Left cardiac atrium (tissue), 4 donors: ENCODE measurements at regions of chr6 and their contacts with region 1.

Region 1: GRCh38 chr6:17599885-17600526 is at the start of gene FAM8A1:
- DNase-seq: peak; percentile 97
- ATAC-seq: peak; percentile 98
- total RNA-seq, gene FAM8A1: 16.7 to 18.5 TPM

Region 2: DNA sequence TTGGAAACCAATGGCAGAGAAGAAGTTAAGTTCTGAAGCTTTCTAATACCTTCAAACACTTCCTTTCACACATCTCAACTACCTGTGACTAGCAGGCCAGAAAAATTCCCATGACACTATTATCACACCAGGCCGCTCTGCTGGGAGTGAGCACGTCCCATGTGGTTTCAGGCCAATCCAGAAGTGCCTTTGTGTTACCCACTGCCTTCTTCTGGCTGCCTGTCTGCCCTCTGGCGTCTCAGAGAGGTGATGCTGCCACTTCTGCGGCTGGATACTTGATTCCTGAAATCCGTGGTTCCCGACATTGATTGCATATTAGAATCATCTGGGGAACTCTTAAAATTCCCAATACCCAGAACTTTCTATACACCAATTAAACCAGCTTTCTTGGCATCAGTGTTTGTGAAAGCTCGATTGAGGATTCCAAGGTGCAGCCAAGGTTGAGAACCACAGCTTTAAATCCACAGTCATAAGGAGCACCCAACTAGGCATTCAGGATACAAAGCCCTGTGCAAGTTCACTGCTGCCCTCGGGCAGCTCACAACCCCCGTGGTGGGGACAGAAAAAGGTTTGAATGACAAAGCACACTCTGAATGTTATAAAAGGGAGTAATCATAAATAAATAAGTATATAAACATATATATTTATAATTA is 432.6 kb before region 1 on chr6:
- intact Hi-C with region 1: no loop called
- DNase-seq: peak; percentile 45
- ATAC-seq: peak; percentile 82 to 90

Region 3: DNA sequence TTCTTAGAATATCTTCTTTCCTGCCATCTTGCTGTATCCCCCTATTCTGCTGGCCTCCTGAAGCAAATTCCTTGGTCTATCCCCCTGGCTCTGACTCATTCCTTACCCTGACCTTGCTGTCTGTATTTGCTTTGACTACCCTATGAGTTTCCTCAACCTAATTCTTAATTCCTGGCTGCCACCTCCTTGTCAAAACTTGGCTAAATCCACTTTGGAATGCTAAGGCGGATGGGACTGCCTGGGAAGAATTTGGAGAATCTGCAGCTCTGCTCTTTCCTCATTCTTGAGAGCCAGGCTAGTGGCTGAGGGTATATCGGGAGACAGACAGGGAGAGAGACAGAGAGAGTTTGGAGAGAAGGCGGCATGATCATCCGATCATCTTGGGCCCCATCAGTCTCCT is 182.2 kb before region 1 on chr6:
- intact Hi-C with region 1: no loop called
- DNase-seq: no peak
- ATAC-seq: peak; percentile 72 to 73

Region 4: DNA sequence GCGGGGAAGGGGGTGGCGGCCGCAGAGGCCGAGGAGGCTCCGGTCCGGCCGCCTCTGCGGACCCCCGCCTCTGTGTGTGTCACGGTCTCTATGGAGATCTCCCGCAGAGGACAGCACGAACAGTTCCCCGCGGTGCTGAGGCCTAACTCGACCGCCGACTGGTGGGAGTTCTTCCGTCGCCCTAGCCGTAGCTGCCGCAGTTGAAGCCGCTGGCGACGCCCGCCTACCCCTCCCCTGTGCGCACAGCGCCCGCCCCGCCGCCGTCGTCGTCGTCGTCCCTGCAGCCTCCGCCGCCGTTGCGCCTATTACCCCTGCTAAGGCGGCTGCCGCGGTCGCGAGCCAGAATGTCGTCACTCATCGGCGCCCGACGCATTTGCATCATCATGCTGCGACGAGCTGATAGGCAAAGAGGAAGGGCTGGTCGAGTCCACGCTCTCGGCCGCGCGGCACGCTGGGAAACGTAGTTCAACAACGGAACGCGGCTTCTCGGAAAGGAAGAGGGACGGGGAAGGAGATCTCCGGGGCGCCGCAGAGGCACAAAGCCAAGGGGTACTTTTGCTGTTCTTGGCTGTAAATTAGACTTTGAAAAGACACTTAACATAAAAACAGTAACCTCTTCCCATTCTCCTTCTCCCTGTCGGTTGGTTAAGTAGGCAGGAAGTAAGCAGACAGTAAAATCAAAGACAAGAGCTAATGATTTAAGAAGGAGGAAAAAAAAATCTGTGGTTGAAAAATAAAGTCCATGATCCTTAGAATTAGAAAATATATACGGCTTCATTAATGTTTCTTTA is 106.8 kb after region 1 on chr6 and contains the start of gene NUP153:
- intact Hi-C with region 1: loop called in 1 of 2 experiments (anchors 5 kb)
- DNase-seq: peak; percentile 98
- ATAC-seq: peak; percentile 87 to 89
- total RNA-seq, gene NUP153: 22.0 to 28.1 TPM

Region 5: GRCh38 chr6:18062733-18063132 is 462.7 kb after region 1 on chr6:
- intact Hi-C with region 1: no loop called
- DNase-seq: no peak
- ATAC-seq: no peak